CD4-positive, alpha-beta T cell (primary cell): ENCODE measurements at regions of chr6 and their contacts with region 1.

Region 1: DNA sequence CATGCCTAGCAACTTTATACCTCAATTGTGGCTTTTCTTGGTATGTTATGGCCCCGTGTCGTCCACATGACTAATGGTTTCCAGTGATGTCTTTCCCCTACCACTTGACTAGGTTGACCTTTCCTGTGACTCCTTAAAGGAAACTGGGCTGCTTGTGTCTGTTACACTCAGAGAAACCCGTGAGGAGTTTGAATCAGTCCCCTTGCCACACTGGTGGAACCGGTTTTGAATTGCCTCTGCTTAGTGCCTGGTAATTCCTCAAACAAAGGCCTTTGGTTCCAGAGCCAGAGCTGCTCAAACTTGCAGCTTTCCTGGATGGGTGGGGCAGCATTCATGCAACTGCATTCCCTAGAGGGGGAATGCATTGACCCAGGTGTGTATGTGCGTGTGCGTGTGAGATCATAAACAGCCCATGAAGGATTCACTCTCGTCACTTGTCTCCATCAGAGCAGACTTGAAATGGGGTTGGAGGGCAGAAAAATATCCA is 22.0 kb downstream of the ECT2L start:
- DNase-seq: no peak
- ATAC-seq: no peak
- H3K4me3 ChIP-seq: no peak overlapping the region
- H3K4me3 Mint-ChIP-seq: no peak overlapping the region
- H3K27ac ChIP-seq: no peak overlapping the region
- H3K27ac Mint-ChIP-seq: no peak overlapping the region
- H3K4me1 ChIP-seq: no peaks in the 10 kb centered on the region
- H3K4me1 Mint-ChIP-seq: peaks cover 6% of the 10 kb centered on the region
- H3K27me3 ChIP-seq: no peaks in the 10 kb centered on the region
- H3K27me3 Mint-ChIP-seq: no peaks in the 10 kb centered on the region
- CTCF ChIP-seq: no peak

Region 2: GRCh38 chr6:139050770-139051313 is 233.0 kb after region 1 on chr6:
- CTCF ChIA-PET with region 1: no interaction called
- POLR2A ChIA-PET with region 1: no interaction called
- intact Hi-C with region 1: loop called in 1 of 2 experiments (anchors 10 kb)
- DNase-seq: peak in 4 of 14 experiments; percentile 9 to 19 (median 13)
- ATAC-seq: no peak
- H3K4me3 ChIP-seq: no peak overlapping the region
- H3K4me3 Mint-ChIP-seq: no peak overlapping the region
- H3K27ac ChIP-seq: no peak overlapping the region
- H3K27ac Mint-ChIP-seq: no peak overlapping the region
- H3K4me1 ChIP-seq: no peaks in the 10 kb centered on the region
- H3K4me1 Mint-ChIP-seq: no peaks in the 10 kb centered on the region
- H3K27me3 ChIP-seq: no peaks in the 10 kb centered on the region
- H3K27me3 Mint-ChIP-seq: no peaks in the 10 kb centered on the region
- CTCF ChIP-seq: no peak

Region 3: GRCh38 chr6:139204978-139205377 is 387.1 kb after region 1 on chr6:
- CTCF ChIA-PET with region 1: no interaction called
- POLR2A ChIA-PET with region 1: no interaction called
- intact Hi-C with region 1: no loop called
- DNase-seq: no peak
- ATAC-seq: no peak
- H3K4me3 ChIP-seq: no peak overlapping the region
- H3K4me3 Mint-ChIP-seq: no peak overlapping the region
- H3K27ac ChIP-seq: no peak overlapping the region
- H3K27ac Mint-ChIP-seq: no peak overlapping the region
- H3K4me1 ChIP-seq: no peaks in the 10 kb centered on the region
- H3K4me1 Mint-ChIP-seq: peaks cover 11% of the 10 kb centered on the region
- H3K27me3 ChIP-seq: no peaks in the 10 kb centered on the region
- H3K27me3 Mint-ChIP-seq: no peaks in the 10 kb centered on the region
- CTCF ChIP-seq: no peak

Region 4: DNA sequence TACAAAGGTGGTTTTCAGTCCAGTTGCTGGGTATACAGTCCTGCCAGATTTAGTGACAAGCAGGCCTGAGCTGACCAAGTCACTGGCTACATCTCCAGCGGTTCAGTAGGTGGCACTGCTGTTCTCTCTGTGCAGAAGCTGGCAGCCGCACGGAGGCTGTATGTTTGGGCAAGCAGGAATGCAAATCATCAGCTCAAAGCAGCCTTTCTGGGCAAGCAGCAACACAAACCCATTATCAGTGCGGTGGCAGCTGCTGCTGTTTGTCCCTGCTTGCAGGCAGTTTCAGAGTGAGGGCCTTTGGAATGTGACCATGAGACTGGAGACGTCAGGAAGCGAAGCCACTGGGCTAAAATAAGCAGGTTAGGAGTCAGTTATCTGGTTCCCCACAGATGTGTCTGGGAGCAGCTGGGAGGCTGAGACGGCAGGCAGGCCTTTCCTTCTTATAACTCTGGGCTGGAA is 401.4 kb after region 1 on chr6:
- CTCF ChIA-PET with region 1: interaction called, 3 read pairs
- POLR2A ChIA-PET with region 1: no interaction called
- intact Hi-C with region 1: loop called in 1 of 2 experiments (anchors 5 kb)
- DNase-seq: peak; percentile 47 to 87 (median 68)
- ATAC-seq: peak; percentile 98
- H3K4me3 ChIP-seq: no peak overlapping the region
- H3K4me3 Mint-ChIP-seq: no peak overlapping the region
- H3K27ac ChIP-seq: no peak overlapping the region
- H3K27ac Mint-ChIP-seq: peak overlapping the region; percentile 1
- H3K4me1 ChIP-seq: peaks cover 8% of the 10 kb centered on the region
- H3K4me1 Mint-ChIP-seq: peaks cover 16% of the 10 kb centered on the region
- H3K27me3 ChIP-seq: no peaks in the 10 kb centered on the region
- H3K27me3 Mint-ChIP-seq: no peaks in the 10 kb centered on the region
- CTCF ChIP-seq: peak; percentile 85